Activated B cell treated with CpG ODN at 0.5 μM for 24 hours (primary cell): ENCODE measurements at regions of chr12 and their contacts with region 1.

Region 1: GRCh38 chr12:111841750-111842555 is at the start of gene MAPKAPK5:
- DNase-seq: peak; percentile 98
- ATAC-seq: peak; percentile 90
- H3K4me3 Mint-ChIP-seq: peak within 1 kb of the TSS; percentile 95
- H3K27ac Mint-ChIP-seq: peak within 1 kb of the TSS; percentile 97
- H3K4me1 Mint-ChIP-seq: peaks cover 45% of the 10 kb centered on the region
- H3K27me3 Mint-ChIP-seq: no peaks in the 10 kb centered on the region
- CTCF ChIP-seq: no peak
- total RNA-seq, gene MAPKAPK5: 51.7 and 61.2 TPM in 2 replicates

Region 2: DNA sequence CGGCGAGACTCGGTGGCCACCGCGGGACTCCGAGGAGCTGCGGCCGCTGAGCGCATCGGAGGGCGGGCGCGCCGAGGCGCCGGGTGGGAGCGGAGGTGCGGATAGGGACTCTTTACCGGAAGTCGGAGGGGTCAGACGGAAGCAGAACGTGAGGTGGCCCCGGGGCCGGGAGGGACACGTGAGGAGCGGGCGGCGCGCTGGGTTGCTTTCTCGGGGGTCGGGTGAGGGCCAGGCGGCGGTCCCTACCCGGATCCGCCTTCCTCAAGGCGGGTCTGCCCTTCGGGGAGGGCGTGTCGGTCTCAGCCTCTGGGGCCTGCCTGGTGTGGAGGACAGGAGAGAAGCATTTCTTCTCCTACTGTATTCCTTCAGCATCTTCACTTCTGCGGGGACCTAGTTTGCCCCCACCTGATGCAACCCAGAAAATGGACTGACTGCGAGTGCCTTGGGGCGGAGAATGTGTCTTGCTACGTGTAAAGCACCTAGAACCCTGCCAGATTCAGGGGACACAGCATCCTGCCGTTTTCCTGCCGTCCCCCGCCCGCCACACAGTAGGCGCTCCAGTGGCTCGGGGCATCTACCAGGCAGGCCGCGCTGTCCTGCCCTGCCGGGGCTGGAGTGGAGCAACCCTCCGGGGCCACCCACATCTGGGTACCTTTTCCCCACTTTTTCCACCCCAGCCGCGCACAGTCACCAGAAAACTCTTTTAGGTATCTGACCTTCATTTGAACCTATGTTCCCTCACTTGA is 242.3 kb before region 1 on chr12:
- CTCF ChIA-PET with region 1: no interaction called
- POLR2A ChIA-PET with region 1: interaction called, 4 read pairs
- intact Hi-C with region 1: loop called (anchors 2 kb)
- DNase-seq: peak; percentile 93
- ATAC-seq: peak; percentile 81
- H3K4me3 Mint-ChIP-seq: peak overlapping the region; percentile 86
- H3K27ac Mint-ChIP-seq: peak overlapping the region; percentile 88
- H3K4me1 Mint-ChIP-seq: peaks cover 29% of the 10 kb centered on the region
- H3K27me3 Mint-ChIP-seq: no peaks in the 10 kb centered on the region
- CTCF ChIP-seq: no peak

Region 3: DNA sequence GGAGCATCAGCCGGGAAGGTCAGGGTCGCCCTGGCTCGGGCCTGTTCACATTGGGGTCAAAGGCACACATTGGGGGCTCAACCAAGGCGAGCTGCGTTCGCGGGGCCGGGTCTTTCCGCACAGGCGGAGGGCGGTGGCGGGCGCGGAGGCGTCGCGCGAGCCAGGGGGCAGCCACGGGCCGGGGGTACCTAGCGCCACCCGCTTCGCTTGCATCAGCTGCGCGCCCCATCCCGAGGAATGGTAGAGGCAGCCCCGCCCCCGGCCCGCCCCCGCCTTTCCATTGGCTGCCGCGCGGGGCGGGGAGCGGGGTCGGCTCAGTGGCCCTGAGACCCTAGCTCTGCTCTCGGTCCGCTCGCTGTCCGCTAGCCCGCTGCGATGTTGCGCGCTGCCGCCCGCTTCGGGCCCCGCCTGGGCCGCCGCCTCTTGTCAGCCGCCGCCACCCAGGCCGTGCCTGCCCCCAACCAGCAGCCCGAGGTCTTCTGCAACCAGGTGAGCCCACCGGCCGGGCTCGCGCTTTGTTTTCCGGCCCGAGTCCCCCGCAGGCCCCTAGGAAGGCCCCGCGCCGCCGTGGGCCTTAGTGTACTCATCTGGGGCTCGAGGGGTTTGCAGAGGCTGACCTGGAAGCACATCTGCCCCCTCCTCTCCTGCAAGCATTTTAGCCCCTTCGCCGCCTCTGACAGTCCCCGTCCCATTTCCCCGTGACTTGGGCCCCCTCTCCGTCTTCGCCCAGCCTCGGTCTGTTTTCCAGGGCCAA is 75.2 kb before region 1 on chr12 and contains the start of gene ALDH2:
- CTCF ChIA-PET with region 1: interaction called, 3 read pairs
- POLR2A ChIA-PET with region 1: interaction called, 16 read pairs
- intact Hi-C with region 1: loop called (anchors 2 kb)
- DNase-seq: peak; percentile 60
- ATAC-seq: peak; percentile 68
- H3K4me3 Mint-ChIP-seq: peak within 1 kb of the TSS; percentile 87
- H3K27ac Mint-ChIP-seq: peak within 1 kb of the TSS; percentile 88
- H3K4me1 Mint-ChIP-seq: peaks cover 55% of the 10 kb centered on the region
- H3K27me3 Mint-ChIP-seq: no peaks in the 10 kb centered on the region
- CTCF ChIP-seq: no peak
- total RNA-seq, gene ALDH2: 36.0 and 37.4 TPM in 2 replicates

Region 4: GRCh38 chr12:112418608-112419298 is 576.8 kb after region 1 on chr12 and contains the start of gene PTPN11:
- CTCF ChIA-PET with region 1: no interaction called
- POLR2A ChIA-PET with region 1: no interaction called
- intact Hi-C with region 1: loop called (anchors 2 kb)
- DNase-seq: peak; percentile 96
- ATAC-seq: peak; percentile 82
- H3K4me3 Mint-ChIP-seq: peak within 1 kb of the TSS; percentile 96
- H3K27ac Mint-ChIP-seq: peak within 1 kb of the TSS; percentile 94
- H3K4me1 Mint-ChIP-seq: peaks cover 40% of the 10 kb centered on the region
- H3K27me3 Mint-ChIP-seq: no peaks in the 10 kb centered on the region
- CTCF ChIP-seq: no peak
- total RNA-seq, gene PTPN11: 69.2 and 83.1 TPM in 2 replicates